ENCODE measurements at regions of chr11 and their contacts with region 1.

Region 1: GRCh38 chr11:64165849-64166635 is at the start of gene MACROD1:
- DNase-seq: peak; percentile 91 to 100

Region 2: DNA sequence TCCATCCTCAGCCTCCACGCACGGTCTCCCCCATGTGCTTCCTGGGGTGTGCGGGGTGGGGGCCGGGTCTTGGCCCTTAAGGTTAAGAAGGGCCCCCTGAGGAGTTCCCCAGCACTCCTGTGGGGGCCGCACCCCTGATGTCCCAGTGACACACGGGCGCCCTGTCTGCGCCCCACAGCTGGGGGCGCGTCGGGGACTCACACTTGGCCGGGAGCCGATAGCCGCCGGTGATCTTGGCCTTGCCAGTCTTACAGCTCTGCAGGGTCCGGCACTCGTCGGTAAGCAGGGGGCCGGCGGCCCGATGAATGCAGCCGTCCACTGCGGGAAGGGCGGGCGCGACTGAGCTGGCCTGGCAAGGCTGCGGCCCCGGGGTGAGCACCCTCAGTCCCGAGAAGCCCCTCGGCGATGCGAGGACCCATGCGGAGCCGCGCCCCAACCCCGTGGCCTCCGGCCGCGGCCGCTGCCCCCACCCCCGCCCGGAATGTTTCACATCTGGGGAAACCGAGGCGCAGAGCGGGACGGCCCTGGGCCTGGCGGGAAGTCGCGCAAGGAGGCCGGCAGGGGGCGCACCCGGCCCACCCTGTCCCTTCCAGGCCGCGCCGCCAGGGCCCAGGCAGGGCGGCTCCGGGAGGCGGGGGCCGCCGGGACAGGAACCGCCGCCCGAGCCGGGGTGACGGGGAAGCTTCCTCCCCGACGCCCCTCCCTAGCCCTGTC is 165.9 kb before region 1 on chr11:
- in situ Hi-C with region 1: loop called (anchors 10 kb)
- DNase-seq: no peak

Region 3: DNA sequence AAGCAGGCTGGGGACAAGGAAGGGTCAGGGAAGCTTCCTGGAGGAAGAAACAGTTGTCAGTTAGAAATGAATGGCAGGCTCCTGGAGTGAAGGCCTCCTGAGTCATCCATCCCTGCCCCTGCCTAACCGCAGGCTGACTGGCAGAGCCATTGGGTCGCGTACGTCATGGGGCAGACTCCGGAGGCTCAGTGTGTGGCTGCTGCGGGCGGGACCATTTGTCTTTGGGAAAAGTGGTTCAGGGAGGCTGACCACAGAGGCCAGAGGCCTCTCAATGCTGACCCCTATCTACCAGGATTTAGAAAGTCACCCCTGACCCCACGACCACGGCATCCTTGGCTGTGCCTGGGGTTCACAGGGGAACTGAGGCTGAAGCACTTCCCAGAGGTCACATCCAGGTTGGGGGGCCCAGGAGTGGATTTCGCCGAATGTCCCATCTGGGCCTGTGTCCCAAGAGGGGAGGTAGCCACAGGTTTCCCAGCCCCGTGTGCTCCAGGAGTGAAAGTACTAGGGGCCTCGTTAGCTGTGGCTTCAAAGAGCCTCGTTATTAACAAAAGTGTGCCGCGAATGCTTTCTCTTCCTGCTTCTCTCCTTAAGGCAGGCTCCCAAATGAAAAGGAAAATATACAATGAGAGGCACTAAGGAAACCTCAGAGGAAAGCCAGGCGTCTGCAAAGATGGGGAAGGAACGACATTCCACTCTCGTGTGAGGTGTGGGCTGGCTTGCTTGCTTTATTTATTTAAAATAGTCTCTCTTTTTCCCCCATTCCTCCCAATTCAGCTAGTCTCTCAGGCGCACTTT is 71.4 kb before region 1 on chr11:
- in situ Hi-C with region 1: no loop called
- DNase-seq: no peak